ENCODE measurements at regions of chr12 and their contacts with region 1.

Region 1: DNA sequence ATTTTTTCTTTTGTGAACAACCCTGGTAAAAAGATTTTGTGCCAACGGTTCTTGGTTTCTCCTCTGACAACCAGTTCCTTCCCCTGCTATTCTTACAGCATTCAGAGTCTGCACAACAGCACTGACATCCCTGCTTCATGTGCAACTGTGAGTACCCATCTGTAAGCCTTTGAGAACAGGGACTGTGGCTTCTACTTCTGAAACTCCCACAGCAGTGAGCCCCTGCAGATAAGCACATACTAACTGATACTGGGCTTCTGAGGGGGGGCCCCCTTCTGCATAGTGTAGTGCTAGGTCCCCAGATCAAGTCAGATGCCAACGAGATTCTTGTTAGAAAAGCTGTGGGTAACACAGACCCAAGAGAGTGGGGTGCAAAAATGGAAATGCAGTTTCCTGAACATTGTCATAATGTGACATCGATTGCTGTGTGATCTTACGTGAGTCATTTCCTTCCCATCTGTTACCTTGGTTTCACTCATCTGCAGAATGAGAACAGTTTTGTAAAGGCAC is 11.1 kb upstream of the NINJ2 start:
- DNase-seq: no peak

Region 2: DNA sequence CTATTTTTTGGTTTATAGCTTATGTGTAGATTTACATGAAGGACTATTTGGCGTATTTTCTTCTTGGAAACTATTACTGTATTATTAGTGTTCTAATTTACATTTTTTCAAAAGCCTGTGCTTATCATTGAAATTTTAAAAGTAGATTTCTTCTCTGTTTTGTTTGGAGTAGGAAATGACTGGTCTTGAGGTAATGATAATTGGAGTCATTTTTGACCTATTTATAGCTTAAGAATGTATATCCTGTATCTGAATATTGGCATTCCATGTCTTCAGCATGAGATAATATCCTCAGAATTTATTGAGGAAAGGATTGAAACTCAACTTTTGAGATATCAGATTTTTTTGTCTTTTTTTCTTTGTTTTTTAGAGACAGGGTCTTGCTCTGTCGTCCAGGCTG is 510.1 kb after region 1 on chr12:
- CTCF ChIA-PET with region 1: interaction called, 10 read pairs
- POLR2A ChIA-PET with region 1: no interaction called
- DNase-seq: no peak